Astrocyte of the cerebellum (primary cell): ENCODE measurements at regions of chr4 and their contacts with region 1.

Region 1: DNA sequence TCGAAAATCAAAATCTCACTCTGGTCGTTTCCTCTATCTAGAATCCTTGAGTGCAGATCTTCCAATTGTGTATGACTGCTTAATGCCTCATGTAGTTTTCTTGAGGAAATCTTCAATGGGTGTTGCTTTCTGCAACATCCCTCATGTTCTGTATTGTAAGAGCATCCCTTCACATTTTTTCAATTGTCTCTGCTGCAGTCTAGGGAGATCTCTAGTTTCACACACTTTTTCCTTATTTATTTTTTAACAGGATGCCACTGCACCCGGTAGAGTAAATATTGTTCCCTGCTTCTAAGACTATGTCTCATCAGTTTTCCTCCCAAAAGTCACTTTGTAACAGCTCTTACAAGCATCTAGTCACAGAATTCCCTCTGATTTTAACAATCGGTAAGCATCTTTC is 50.3 kb downstream of the UGT2B4 start:
- DNase-seq: no peak
- H3K4me3 ChIP-seq: no peak overlapping the region
- CTCF ChIP-seq: no peak

Region 2: GRCh38 chr4:69141320-69141719 is 304.1 kb before region 1 on chr4:
- in situ Hi-C with region 1: loop called (anchors 5 kb)
- DNase-seq: no peak
- H3K4me3 ChIP-seq: no peak overlapping the region
- CTCF ChIP-seq: no peak

Region 3: DNA sequence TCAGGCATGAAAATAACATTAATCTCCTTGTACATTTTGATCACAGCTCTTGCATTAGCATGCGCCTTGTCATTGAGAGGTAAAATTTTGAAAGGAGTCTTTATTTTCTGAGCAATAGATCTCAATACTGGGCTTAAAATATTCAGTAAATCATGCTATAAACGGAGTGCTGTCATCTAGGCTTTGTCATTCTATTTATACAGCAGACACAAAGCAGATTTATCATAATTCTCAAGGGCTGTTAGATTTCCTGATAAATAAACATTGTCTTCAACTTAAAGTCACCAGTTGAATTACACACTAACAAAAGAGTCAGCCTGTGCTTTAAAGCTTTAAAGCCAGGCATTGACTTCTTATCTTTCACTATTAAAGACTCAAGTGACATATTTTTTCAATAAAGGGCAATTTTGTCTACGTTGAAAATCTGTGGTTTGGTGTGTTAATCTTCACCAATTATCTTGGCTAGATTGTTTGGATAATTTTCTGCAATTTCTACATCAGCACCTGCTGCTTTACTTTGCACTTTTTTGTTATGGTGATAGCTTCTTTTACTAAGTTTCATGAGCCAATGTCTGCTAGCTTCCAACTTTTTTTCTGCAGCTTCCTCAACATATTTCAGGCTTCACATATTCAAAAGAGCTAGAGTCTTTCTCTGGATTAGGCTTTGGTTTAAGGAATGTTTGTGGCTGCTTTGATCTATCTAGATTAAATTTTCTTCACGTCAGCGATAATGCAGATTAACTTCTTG is 78.2 kb after region 1 on chr4:
- in situ Hi-C with region 1: no loop called
- DNase-seq: no peak
- H3K4me3 ChIP-seq: no peak overlapping the region
- CTCF ChIP-seq: no peak